Cardiac septum (tissue), 1 donor: ENCODE measurements at regions of chr9 and their contacts with region 1.

Region 1: GRCh38 chr9:92342825-92343488 is 17.2 kb downstream of the CENPP start:
- DNase-seq: no peak

Region 2: GRCh38 chr9:92097997-92098482 is 244.9 kb before region 1 on chr9:
- intact Hi-C with region 1: no loop called
- DNase-seq: peak; percentile 87

Region 3: DNA sequence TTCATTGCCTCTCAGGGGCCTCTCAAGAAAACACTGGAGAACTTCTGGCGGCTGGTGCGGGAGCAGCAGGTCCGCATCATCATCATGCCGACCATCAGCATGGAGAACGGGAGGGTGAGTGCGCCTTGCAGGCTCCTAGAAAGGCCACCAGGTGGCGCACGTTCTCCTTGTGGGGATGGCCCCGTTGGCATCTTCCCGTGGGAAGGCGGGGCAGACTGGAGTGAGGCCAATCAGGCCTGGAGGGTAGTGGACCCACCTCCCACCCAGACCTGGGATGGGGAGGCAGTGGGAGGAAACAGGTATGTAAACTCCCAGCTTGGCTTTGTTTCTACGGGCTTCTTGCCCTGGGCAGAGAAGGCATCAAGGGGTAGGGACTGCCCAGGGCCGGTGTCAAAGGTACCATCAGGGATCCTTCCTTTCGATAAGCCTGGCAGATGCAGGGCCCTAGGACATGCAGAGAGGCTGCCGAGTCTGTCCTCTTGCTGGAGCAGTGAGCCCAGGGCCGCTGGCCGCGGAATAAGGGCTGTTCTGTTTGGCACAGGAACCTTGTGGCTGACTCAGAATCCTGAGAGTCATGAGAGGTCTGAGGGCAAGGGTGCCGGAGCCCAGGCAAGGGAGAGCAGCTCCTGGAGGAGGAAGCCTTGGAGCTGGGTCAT is 208.9 kb before region 1 on chr9:
- intact Hi-C with region 1: no loop called
- DNase-seq: peak; percentile 89

Region 4: GRCh38 chr9:92438900-92439526 is 96.1 kb after region 1 on chr9:
- intact Hi-C with region 1: loop called (anchors 5 kb)
- DNase-seq: no peak

Region 5: GRCh38 chr9:92468206-92468605 is 125.2 kb after region 1 on chr9:
- intact Hi-C with region 1: no loop called
- DNase-seq: no peak